Activated CD4-positive, alpha-beta T cell treated with anti-CD3 and anti-CD28 coated beads, Interleukin-2, amount 10 ng/mL, durations not matched to agents 24 days and 14 days (primary cell): ENCODE measurements at regions of chr3 and their contacts with region 1.

Region 1: DNA sequence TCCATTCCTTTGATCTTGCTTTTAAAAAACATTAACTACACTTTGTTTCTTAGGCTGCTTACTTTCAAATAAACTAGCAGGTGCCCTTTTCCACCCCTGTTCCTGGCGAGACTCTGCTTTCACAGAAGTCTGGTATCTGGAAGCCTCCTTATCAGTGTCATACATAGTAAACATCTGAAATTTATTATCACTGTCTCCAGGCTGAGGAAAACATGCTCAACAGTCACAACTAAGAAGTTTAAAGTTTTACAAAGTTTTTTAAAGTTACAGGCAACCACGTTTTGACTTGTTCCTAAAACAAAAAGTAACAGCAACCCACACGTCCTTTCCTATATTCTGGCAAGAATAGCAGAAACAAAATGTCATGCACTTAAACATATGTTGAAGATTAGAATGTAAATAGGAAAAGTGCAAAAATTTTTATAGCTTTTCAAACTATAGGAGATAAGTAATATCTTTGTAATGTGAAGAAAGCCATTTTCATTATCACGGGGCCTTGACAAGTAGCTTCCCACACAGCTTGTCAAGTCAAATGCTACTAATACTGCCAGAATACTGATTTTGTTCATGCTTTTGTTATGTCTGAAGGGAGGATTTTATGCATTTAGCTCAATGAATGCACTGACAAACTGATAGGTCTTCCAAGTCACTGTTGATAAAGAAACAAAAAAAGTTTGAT is 275.2 kb upstream of the KCNMB2 start:
- DNase-seq: no peak
- H3K4me3 Mint-ChIP-seq: no peak overlapping the region
- H3K27ac Mint-ChIP-seq: no peak overlapping the region
- H3K4me1 Mint-ChIP-seq: no peaks in the 10 kb centered on the region
- H3K27me3 Mint-ChIP-seq: no peaks in the 10 kb centered on the region

Region 2: GRCh38 chr3:178223876-178224275 is 37.1 kb before region 1 on chr3:
- intact Hi-C with region 1: loop called (anchors 1 kb)
- DNase-seq: no peak
- H3K4me3 Mint-ChIP-seq: no peak overlapping the region
- H3K27ac Mint-ChIP-seq: no peak overlapping the region
- H3K4me1 Mint-ChIP-seq: no peaks in the 10 kb centered on the region
- H3K27me3 Mint-ChIP-seq: no peaks in the 10 kb centered on the region